Body of pancreas (tissue), 4 donors: ENCODE measurements at regions of chr14 and their contacts with region 1.

Region 1: DNA sequence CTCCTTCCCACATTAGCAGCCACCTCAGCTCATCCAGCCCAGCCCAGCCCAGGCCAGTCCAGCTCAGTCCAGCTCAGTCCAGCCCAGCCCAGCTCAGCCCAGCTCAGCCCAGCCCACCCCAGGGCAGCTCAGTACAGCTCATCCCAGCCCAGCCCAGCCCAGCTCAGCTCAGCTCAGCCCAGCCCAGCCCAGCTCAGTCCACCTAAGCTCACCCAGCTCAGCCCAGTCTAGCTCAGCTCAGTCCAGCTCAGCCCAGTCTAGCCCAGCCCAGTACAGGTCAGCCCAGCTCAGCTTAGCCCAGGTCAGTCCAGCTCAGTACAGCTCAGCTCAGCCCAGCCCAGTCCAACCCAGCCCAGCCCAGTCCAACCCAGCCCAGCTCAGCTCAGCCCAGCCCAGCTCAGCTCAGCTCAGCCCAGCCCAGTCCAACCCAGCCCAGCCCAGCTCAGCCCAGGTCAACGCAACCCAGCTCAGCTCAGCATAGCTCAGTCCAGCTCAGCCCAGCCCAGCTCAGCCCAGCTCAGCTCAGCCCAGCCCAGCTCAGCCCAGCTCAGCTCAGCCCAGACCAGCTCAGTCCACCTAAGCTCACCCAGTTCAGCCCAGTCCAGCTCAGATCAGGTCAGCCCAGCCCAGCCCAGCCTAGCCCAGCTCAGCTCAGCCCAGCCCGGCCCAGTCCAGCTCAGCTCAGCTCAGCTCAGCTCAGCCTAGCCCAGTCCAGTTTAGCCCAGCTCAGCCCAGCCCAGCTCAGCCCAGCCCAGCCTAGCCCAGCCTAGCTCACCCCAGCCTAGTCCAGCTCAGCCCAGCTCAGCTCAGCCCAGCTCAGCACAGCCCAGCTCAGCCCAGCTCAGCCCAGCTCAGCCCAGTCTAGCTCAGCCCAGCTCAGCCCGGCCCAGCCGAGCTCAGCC is 63.0 kb downstream of the TMEM121 start:
- DNase-seq: no peak
- ATAC-seq: no peak
- H3K4me3 ChIP-seq: no peak overlapping the region
- H3K27ac ChIP-seq: no peak overlapping the region
- H3K4me1 ChIP-seq: no peaks in the 10 kb centered on the region
- H3K27me3 ChIP-seq: no peaks in the 10 kb centered on the region
- CTCF ChIP-seq: no peak
- POLR2A ChIP-seq: no peak

Region 2: GRCh38 chr14:105448706-105449111 is 140.7 kb before region 1 on chr14:
- intact Hi-C with region 1: no loop called
- DNase-seq: peak; percentile 70 to 81 (median 76)
- ATAC-seq: peak; percentile 91
- H3K4me3 ChIP-seq: no peak overlapping the region
- H3K27ac ChIP-seq: no peak overlapping the region
- H3K4me1 ChIP-seq: peaks cover 11% of the 10 kb centered on the region
- H3K27me3 ChIP-seq: no peaks in the 10 kb centered on the region
- CTCF ChIP-seq: peak; percentile 84 to 96 (median 89)
- POLR2A ChIP-seq: no peak

Region 3: DNA sequence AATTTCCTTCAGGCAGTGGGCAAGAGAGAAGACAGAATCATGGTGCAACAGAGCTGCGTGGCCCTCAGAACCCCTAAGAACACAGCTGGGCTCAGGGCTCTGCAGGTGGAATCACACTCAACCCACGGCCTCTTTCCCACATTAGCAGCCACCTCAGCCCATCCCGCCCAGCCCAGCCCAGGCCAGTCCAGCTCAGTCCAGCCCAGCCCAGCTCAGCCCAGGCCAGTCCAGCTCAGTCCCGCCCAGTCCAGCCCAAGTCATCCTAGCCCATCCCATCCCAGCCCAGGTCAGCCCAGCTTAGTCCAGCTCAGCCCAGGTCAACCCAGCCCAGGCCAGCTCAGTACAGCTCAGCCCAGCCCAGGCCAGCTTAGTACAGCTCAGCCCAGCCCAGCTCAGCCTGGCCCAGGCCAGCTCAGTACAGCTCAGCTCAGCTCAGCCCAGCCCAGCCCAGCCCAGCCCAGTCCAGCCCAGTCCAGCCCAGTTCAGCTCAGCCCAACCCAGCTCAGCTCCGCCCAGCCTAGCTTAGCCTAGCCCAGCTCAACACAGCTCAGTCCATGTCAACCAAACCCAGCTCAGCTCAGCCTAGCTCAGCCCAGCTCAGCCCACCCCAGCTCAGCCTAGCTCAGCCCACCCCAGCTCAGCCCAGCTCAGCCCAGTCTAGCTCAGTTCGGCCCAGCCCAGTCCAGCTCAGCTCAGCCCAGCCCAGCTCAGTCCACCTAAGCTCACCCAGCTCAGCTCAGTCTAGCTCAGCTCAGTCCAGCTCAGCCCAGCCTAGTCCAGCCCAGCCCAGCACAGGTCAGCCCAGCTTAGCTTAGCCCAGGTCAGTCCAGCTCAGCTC is 120.1 kb after region 1 on chr14:
- intact Hi-C with region 1: loop called (anchors 2 kb)
- DNase-seq: no peak
- ATAC-seq: no peak
- H3K4me3 ChIP-seq: no peak overlapping the region
- H3K27ac ChIP-seq: no peak overlapping the region
- H3K4me1 ChIP-seq: no peaks in the 10 kb centered on the region
- H3K27me3 ChIP-seq: no peaks in the 10 kb centered on the region
- CTCF ChIP-seq: no peak
- POLR2A ChIP-seq: no peak